ENCODE measurements at regions of chr2 and their contacts with region 1.

Region 1: DNA sequence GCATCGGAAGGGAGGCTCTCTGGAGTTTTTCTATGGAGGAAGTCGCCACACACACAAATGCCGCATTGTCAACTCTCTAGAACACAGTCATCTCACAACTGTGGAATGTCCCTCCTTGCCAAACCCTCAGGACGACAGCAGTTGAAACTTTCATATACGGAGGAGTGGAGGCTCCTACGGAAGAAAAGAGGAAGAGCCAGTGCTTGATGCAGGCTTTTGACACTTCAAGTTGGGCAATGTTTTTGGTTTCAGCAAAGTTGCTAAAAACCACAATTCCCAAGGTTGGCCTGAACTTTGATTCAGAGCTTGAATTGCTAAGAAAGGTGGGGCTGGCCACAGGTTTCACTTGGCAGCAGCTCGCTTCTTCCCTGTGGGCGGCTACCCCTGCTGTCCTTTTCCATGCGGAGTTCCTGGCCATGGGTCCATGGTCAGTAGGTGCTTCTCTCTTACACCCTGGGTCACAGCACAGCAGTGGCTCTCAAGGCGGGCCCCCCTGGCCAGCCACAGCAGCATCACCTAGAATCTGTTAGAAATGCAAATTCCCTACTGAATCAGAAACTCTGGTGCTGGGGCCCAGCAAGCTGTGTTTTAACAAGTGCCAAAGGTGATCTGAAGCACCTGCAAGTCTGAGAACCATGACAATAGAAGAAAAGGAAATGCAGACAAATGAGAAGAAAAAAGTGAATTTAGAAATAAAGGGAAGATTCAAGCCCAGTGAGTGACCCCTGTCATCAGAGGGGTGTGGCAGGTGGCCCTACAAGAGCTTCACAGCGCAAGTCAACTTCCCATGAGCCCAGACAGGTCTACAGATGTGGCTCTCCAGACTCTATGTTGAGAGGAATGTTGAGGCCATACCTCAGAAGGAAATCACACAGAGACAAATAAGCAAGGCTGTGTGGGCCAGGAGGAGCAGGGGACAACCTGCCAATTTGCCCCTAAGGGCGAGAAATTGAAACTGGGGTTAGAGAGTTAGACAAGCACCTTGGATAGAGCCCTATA is 856.4 kb downstream of the RNF144A start:
- DNase-seq: peak; percentile 63
- ATAC-seq: peak; percentile 66
- H3K4me3 Mint-ChIP-seq: no peak overlapping the region
- H3K27ac Mint-ChIP-seq: peak overlapping the region; percentile 76
- H3K4me1 Mint-ChIP-seq: peaks cover 31% of the 10 kb centered on the region
- H3K27me3 Mint-ChIP-seq: no peaks in the 10 kb centered on the region
- CTCF ChIP-seq: no peak

Region 2: GRCh38 chr2:7639476-7639875 is 134.2 kb before region 1 on chr2:
- CTCF ChIA-PET with region 1: no interaction called
- POLR2A ChIA-PET with region 1: no interaction called
- intact Hi-C with region 1: no loop called
- DNase-seq: no peak
- ATAC-seq: no peak
- H3K4me3 Mint-ChIP-seq: no peak overlapping the region
- H3K27ac Mint-ChIP-seq: no peak overlapping the region
- H3K4me1 Mint-ChIP-seq: peaks cover 7% of the 10 kb centered on the region
- H3K27me3 Mint-ChIP-seq: no peaks in the 10 kb centered on the region
- CTCF ChIP-seq: no peak

Region 3: DNA sequence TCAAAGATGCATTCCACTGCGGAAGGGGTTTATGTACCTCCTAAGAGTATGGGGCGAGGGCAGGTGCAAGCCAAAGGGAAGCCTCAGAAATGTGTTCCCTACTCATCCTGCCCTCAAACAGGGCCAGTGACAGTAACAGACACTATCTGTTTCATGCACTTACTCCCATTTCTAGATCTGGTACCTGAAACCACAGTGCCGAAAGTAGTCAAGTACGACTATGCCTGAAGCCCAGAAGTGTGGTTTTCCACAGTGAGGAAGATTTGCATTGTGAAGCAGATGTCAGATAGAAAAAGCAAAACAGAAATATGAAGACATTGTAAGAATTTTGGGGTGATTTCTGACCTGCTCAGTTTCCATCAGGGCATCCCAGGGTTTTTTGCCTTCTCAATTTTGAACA is 107.8 kb before region 1 on chr2:
- CTCF ChIA-PET with region 1: no interaction called
- POLR2A ChIA-PET with region 1: no interaction called
- intact Hi-C with region 1: no loop called
- DNase-seq: no peak
- ATAC-seq: no peak
- H3K4me3 Mint-ChIP-seq: no peak overlapping the region
- H3K27ac Mint-ChIP-seq: no peak overlapping the region
- H3K4me1 Mint-ChIP-seq: peaks cover 25% of the 10 kb centered on the region
- H3K27me3 Mint-ChIP-seq: no peaks in the 10 kb centered on the region
- CTCF ChIP-seq: no peak

Region 4: DNA sequence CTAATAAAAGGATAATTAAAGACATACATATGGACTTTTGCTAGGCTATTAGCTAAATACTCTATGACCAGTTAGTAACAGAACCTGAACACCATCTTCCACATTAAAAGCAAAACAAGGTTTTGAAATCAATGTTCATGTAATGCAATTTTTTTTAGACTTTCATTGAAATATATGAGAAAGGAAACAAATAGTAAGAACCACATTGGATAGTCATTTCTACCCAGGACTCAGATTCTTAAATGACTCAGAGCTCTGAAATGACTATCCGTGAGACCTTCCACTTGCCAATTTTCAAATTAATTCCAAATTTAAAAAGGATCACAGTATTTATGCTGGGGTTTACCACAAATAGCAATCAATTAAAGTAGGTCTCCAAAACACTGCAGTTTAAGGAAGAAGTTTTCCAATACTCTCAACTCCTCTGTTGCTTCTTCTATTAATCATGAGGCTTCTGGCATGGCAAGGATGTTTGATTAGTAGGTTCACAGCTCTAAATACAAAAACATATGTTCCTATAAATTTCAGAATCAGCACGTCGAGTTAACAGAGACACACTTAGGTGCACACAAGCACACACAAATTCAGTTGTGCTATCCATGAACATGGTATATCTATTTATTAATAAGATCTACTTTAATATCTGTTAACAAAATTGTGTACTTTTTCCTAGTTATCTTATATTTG is 15.4 kb before region 1 on chr2:
- CTCF ChIA-PET with region 1: interaction called, 10 read pairs
- POLR2A ChIA-PET with region 1: interaction called, 11 read pairs
- intact Hi-C with region 1: no loop called
- DNase-seq: no peak
- ATAC-seq: peak; percentile 74
- H3K4me3 Mint-ChIP-seq: no peak overlapping the region
- H3K27ac Mint-ChIP-seq: peak overlapping the region; percentile 66
- H3K4me1 Mint-ChIP-seq: peaks cover 17% of the 10 kb centered on the region
- H3K27me3 Mint-ChIP-seq: no peaks in the 10 kb centered on the region
- CTCF ChIP-seq: no peak